Sigmoid colon (tissue), 7 donors: ENCODE measurements at regions of chr3 and their contacts with region 1.

Region 1: DNA sequence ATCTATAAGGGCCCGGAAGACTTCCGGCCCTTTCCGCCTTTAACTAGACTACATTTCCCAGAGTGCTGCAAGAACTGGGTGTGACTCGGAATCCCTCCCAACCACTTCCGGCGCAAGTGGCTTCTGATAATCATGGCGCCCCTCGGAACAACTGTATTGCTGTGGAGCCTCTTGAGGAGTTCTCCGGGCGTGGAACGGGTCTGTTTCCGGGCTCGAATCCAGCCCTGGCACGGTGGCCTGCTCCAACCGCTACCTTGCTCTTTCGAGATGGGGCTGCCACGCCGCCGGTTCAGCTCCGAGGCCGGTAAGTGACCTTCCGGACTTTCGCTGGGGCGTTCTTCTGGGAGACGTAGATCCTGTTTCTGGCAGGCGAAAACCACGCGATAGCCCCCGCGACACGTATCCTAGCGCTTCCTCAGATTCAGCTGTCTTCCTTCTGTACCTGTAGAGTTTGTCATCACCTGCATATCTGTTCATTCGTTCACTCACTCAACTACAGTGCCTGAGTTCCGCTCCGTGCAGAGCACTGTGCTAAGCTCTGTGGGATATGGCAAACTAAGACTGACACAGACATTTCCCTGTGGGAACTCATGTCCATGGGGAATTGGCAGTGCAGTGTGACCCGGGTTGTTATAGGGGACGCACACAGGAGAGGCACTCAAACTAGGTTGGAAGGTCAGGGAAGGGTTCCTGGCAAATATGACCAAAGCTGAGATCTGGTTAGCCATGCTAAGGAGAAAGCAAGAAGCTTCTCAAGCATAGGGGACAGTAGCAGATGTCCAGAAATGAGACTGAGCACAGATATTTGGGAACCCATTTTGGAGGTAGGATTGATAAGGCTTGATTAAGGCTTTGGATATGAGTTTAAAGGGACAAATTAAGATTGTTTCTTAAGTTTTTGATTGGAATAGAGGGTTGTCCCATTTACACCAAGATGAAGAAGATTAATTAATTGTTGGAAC is at the start of gene MRPS22:
- DNase-seq: peak; percentile 87
- H3K4me3 ChIP-seq: peak within 1 kb of the TSS; percentile 76 to 93 (median 88)
- H3K27ac ChIP-seq: peak within 1 kb of the TSS; percentile 78 to 82 (median 82)
- H3K4me1 ChIP-seq: peaks cover 0 to 22% (median 18%) of the 10 kb centered on the region in 4 donors
- H3K27me3 ChIP-seq: no peaks in the 10 kb centered on the region
- CTCF ChIP-seq: no peak
- EP300 ChIP-seq: no peak
- POLR2A ChIP-seq: peak in 1 of 2 donors; percentile 21
- total RNA-seq, gene MRPS22: 39.2 to 60.7 (median 47.1) TPM

Region 2: GRCh38 chr3:139389458-139390209 is 45.5 kb after region 1 on chr3 and contains the start of gene COPB2:
- intact Hi-C with region 1: loop called (anchors 5 kb)
- DNase-seq: peak; percentile 100
- H3K4me3 ChIP-seq: peak within 1 kb of the TSS; percentile 73 to 96 (median 90)
- H3K27ac ChIP-seq: peak within 1 kb of the TSS; percentile 94 to 96 (median 96)
- H3K4me1 ChIP-seq: peaks cover 0 to 43% (median 39%) of the 10 kb centered on the region in 4 donors
- H3K27me3 ChIP-seq: no peaks in the 10 kb centered on the region
- CTCF ChIP-seq: no peak
- EP300 ChIP-seq: peak in 1 of 4 donors; percentile 66
- POLR2A ChIP-seq: peak; percentile 73 to 80
- total RNA-seq, gene COPB2: 54.0 to 82.0 (median 68.7) TPM